Breast epithelium (tissue), 4 donors: ENCODE measurements at regions of chr7 and their contacts with region 1.

Region 1: GRCh38 chr7:74129887-74130286 is 44.3 kb upstream of the EIF4H start:
- DNase-seq: no peak
- H3K4me3 ChIP-seq: no peak overlapping the region
- H3K27ac ChIP-seq: no peak overlapping the region
- H3K4me1 ChIP-seq: no peaks in the 10 kb centered on the region
- H3K27me3 ChIP-seq: no peaks in the 10 kb centered on the region
- CTCF ChIP-seq: no peak
- POLR2A ChIP-seq: no peak

Region 2: GRCh38 chr7:73921623-73922528 is 208.0 kb before region 1 on chr7:
- intact Hi-C with region 1: no loop called
- DNase-seq: no peak
- H3K4me3 ChIP-seq: no peak overlapping the region
- H3K27ac ChIP-seq: no peak overlapping the region
- H3K4me1 ChIP-seq: no peaks in the 10 kb centered on the region
- H3K27me3 ChIP-seq: no peaks in the 10 kb centered on the region
- CTCF ChIP-seq: no peak
- POLR2A ChIP-seq: no peak

Region 3: GRCh38 chr7:74119831-74120230 is 10.1 kb before region 1 on chr7:
- intact Hi-C with region 1: loop called (anchors 1 kb)
- DNase-seq: no peak
- H3K4me3 ChIP-seq: no peak overlapping the region
- H3K27ac ChIP-seq: no peak overlapping the region
- H3K4me1 ChIP-seq: no peaks in the 10 kb centered on the region
- H3K27me3 ChIP-seq: no peaks in the 10 kb centered on the region
- CTCF ChIP-seq: no peak
- POLR2A ChIP-seq: no peak